Activated CD4-positive, alpha-beta memory T cell treated with anti-CD3 and anti-CD28 coated beads, Interleukin-2, amount 10 ng/mL, durations not matched to agents 7 days and 5 days (primary cell): ENCODE measurements at regions of chr17 and their contacts with region 1.

Region 1: DNA sequence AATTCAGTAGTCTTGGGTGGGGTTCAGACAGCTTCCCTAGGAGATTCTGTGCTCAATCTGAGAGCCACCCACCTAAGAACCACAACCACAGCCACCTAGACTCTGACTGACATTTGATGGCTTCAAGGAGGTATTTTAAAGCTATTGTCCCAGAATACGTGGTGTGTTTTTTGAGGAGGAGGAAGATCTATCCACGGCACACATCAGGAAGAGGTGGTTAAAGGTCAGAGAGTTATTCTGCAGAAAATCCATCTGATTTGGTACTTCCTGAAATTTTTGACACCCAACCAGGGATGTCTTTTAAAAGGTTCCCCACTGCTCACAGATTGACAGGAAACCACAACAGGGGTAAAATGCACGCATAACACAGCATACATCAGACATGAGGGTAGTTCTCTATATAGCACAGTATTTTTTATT is 25.1 kb downstream of the SMARCE1 start:
- DNase-seq: no peak
- H3K4me3 Mint-ChIP-seq: peak overlapping the region; percentile 18
- H3K27ac Mint-ChIP-seq: peak overlapping the region; percentile 17
- H3K4me1 Mint-ChIP-seq: peaks cover 60% of the 10 kb centered on the region
- H3K27me3 Mint-ChIP-seq: no peaks in the 10 kb centered on the region

Region 2: GRCh38 chr17:40564883-40565768 is 57.4 kb before region 1 on chr17 and contains the start of gene CCR7:
- CTCF ChIA-PET with region 1: interaction called, 54 read pairs
- POLR2A ChIA-PET with region 1: interaction called, 18 read pairs
- DNase-seq: peak; percentile 75
- H3K4me3 Mint-ChIP-seq: peak within 1 kb of the TSS; percentile 74
- H3K27ac Mint-ChIP-seq: peak within 1 kb of the TSS; percentile 91
- H3K4me1 Mint-ChIP-seq: peaks cover 62% of the 10 kb centered on the region
- H3K27me3 Mint-ChIP-seq: peaks cover 47% of the 10 kb centered on the region
- total RNA-seq, gene CCR7: 43.3 to 44.6 TPM

Region 3: DNA sequence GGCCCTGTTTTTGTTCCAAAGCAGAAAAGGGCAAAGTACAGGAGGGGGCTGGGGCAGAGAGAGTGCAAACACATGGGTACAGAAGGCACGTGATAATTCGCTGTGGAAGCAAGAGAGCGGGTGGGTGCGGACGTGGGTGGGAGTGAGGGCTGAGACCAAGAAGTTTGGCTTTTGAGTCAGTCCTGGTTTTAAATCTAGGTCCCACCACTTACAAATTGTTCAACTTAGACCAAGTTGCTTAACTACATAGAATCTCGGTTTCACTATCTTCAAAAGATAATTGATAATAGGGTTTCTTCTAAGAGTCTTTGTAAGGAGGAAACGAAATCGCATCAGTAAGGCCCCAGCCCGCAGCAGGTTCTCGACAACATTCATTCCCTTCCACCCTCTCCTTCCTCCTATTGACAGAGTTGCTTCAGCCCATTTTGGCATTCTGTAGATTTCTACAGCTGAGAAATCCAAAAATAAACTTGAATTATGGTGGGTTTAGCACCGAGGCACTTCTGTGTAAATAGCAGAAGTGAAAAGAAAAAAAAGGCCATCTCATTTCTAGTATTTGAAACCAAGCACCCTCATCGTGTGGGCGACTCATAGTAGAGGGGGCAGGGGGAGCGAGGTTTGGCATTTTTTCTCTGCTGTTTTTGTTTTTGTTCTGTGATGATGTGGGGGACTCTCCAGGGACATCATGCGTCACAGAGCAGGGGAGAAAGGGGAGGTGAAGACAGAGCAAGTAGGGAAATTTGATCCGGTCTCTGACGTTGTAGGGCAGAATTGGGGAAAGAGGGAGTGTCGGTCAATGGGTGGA is 23.7 kb before region 1 on chr17:
- CTCF ChIA-PET with region 1: interaction called, 15 read pairs
- POLR2A ChIA-PET with region 1: interaction called, 6 read pairs
- DNase-seq: peak; percentile 61
- H3K4me3 Mint-ChIP-seq: peak overlapping the region; percentile 44
- H3K27ac Mint-ChIP-seq: peak overlapping the region; percentile 97
- H3K4me1 Mint-ChIP-seq: peaks cover 69% of the 10 kb centered on the region
- H3K27me3 Mint-ChIP-seq: no peaks in the 10 kb centered on the region

Region 4: GRCh38 chr17:40647624-40648383 is 25.3 kb after region 1 on chr17 and contains the start of gene SMARCE1:
- CTCF ChIA-PET with region 1: interaction called, 18 read pairs
- POLR2A ChIA-PET with region 1: interaction called, 55 read pairs
- DNase-seq: peak; percentile 73
- H3K4me3 Mint-ChIP-seq: peak within 1 kb of the TSS; percentile 95
- H3K27ac Mint-ChIP-seq: peak within 1 kb of the TSS; percentile 94
- H3K4me1 Mint-ChIP-seq: peaks cover 52% of the 10 kb centered on the region
- H3K27me3 Mint-ChIP-seq: no peaks in the 10 kb centered on the region
- total RNA-seq, gene SMARCE1: 96.7 to 102 TPM

Region 5: DNA sequence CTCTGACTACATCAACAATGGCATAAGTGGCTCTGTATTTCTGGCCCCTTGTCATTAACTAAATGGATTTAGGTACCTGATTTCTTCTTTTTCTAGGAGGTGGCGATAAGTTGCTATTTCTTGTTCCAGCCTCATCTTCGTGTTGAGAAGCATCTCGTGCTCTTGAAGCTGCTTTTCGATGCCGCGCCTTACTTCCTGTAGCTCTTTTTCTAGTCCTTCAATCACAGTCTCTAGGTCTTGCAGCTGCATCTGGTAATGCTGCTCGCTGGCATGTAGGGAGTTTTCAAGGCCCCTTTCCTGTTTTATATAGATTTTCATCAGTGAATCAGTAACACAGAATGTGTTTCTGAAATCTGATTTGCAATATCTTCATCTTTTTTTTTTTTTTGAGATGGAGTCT is 37.4 kb after region 1 on chr17:
- CTCF ChIA-PET with region 1: no interaction called
- POLR2A ChIA-PET with region 1: no interaction called
- DNase-seq: no peak
- H3K4me3 Mint-ChIP-seq: no peak overlapping the region
- H3K27ac Mint-ChIP-seq: no peak overlapping the region
- H3K4me1 Mint-ChIP-seq: peaks cover 6% of the 10 kb centered on the region
- H3K27me3 Mint-ChIP-seq: peaks cover 45% of the 10 kb centered on the region

Region 6: GRCh38 chr17:40671282-40671681 is 48.8 kb after region 1 on chr17:
- CTCF ChIA-PET with region 1: no interaction called
- POLR2A ChIA-PET with region 1: no interaction called
- DNase-seq: no peak
- H3K4me3 Mint-ChIP-seq: no peak overlapping the region
- H3K27ac Mint-ChIP-seq: no peak overlapping the region
- H3K4me1 Mint-ChIP-seq: no peaks in the 10 kb centered on the region
- H3K27me3 Mint-ChIP-seq: peaks cover 40% of the 10 kb centered on the region